Aorta (tissue), 5 donors: ENCODE measurements at regions of chr4 and their contacts with region 1.

Region 1: DNA sequence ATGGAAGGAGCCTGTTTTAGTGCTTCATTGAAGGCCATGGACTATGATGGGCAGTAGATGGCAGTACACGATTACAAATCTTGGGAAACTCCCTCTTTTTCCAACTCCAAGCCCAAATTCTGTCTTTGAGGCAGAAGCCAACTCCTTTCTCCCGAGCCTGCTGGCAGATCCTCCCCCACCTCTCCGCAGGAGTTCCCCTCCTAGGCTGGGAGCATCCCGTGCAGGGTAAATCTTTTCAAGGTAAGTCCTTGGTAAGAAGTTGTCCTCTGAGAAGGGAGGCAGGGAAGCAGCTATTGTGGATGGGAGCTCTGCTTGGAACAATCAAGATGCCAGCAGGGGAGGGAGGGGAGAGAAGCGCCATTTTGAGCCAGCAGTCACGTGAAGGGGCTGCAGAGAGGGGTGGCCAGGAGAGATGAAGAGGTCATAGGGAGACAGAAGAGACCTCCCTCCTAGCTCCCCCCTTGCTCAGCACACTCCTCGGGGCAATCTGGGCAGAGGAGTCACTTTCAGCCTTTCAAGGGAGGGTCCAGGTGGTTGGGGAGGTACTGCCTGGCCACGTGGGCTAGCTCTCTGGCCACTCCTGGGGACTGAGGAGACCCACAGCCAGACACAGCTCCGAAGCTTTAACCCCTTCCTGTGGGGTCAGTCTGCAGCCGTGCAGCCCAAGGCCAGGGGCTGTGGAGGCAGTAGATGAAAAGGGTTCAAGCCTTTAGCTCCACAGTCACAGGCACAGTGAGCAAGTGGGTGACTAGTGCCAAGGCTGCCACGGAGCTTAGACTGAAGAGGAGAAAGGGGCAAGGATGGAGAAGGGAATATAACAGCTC is 9.6 kb downstream of the CC2D2A start:
- DNase-seq: peak in 1 of 2 donors; percentile 64
- ATAC-seq: peak; percentile 89
- H3K4me3 ChIP-seq: peak overlapping the region; percentile 12 to 73
- H3K27ac ChIP-seq: peak overlapping the region in 1 of 2 donors; percentile 20
- H3K4me1 ChIP-seq: no peaks in the 10 kb centered on the region
- H3K27me3 ChIP-seq: no peaks in the 10 kb centered on the region

Region 2: GRCh38 chr4:15385928-15386327 is 93.4 kb before region 1 on chr4:
- intact Hi-C with region 1: no loop called
- DNase-seq: peak; percentile 66 to 77
- ATAC-seq: peak; percentile 83
- H3K4me3 ChIP-seq: no peak overlapping the region
- H3K27ac ChIP-seq: peak overlapping the region; percentile 30 to 62
- H3K4me1 ChIP-seq: peaks cover 6 to 19% of the 10 kb centered on the region in 2 donors
- H3K27me3 ChIP-seq: no peaks in the 10 kb centered on the region

Region 3: GRCh38 chr4:15649914-15650545 is 170.7 kb after region 1 on chr4:
- intact Hi-C with region 1: loop called in 1 of 2 experiments (anchors 5 kb)
- DNase-seq: no peak
- ATAC-seq: peak; percentile 75
- H3K4me3 ChIP-seq: peak overlapping the region in 1 of 2 donors; percentile 39
- H3K27ac ChIP-seq: peak overlapping the region in 1 of 2 donors; percentile 82
- H3K4me1 ChIP-seq: peaks cover 0 to 6% of the 10 kb centered on the region in 2 donors
- H3K27me3 ChIP-seq: no peaks in the 10 kb centered on the region